Heart right ventricle (tissue), 16 donors: ENCODE measurements at regions of chr2 and their contacts with region 1.

Region 1: GRCh38 chr2:198546122-198546521 is 741.7 kb downstream of the PLCL1 start:
- DNase-seq: no peak
- ATAC-seq: no peak
- H3K4me3 ChIP-seq: no peak overlapping the region
- H3K27ac ChIP-seq: no peak overlapping the region
- H3K4me1 ChIP-seq: no peaks in the 10 kb centered on the region
- H3K27me3 ChIP-seq: no peaks in the 10 kb centered on the region
- CTCF ChIP-seq: no peak

Region 2: DNA sequence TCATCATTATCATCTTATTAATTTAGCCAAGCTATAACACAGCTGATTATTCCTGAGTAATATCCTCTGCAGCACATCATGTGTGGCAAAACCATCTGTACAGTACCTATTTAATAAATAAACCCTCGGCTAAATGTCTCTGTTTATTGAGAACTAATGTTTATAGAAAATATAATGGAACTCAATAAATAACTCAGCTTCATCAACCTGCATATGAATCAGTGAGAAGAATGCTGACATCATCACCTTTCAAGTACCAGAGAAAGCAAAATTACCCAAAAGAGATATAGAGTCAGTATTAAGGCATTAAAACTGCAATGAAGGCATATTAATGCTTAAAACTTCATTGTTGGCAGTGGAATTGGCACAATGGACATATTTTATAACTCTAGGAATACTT is 183.4 kb before region 1 on chr2:
- intact Hi-C with region 1: no loop called
- DNase-seq: no peak
- ATAC-seq: no peak
- H3K4me3 ChIP-seq: no peak overlapping the region
- H3K27ac ChIP-seq: no peak overlapping the region
- H3K4me1 ChIP-seq: no peaks in the 10 kb centered on the region
- H3K27me3 ChIP-seq: peaks cover 0 to 9% (median 0%) of the 10 kb centered on the region in 7 donors
- CTCF ChIP-seq: no peak

Region 3: DNA sequence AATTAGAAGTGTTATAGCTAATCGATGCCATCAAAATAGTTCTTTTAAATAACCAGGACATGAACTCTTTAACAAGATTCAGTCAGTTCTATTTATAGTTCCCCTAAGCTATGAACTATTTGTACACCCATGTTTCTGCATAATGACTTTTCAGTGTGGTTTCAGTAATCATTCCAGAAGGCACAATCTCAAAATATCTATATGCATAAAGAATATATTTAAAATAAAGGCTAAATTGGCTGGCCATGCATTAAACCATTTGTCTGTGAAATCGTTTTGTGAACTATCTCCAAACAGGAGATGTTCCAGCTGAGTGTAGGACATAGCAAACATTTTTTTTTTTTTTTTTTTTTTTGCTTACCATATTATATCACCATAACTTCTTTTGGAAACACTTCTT is 22.4 kb before region 1 on chr2:
- intact Hi-C with region 1: loop called in 1 of 10 experiments (anchors 1 kb)
- DNase-seq: no peak
- ATAC-seq: no peak
- H3K4me3 ChIP-seq: no peak overlapping the region
- H3K27ac ChIP-seq: no peak overlapping the region
- H3K4me1 ChIP-seq: no peaks in the 10 kb centered on the region
- H3K27me3 ChIP-seq: no peaks in the 10 kb centered on the region
- CTCF ChIP-seq: no peak